Activated naive CD4-positive, alpha-beta T cell treated with anti-CD3 and anti-CD28 coated beads for 36 hours (primary cell): ENCODE measurements at regions of chr17 and their contacts with region 1.

Region 1: GRCh38 chr17:720706-721538 is 6.3 kb upstream of the VPS53 start:
- DNase-seq: no peak
- H3K4me3 Mint-ChIP-seq: no peak overlapping the region
- H3K27ac Mint-ChIP-seq: no peak overlapping the region
- H3K4me1 Mint-ChIP-seq: peaks cover 2% of the 10 kb centered on the region
- H3K27me3 Mint-ChIP-seq: no peaks in the 10 kb centered on the region

Region 2: GRCh38 chr17:740240-741017 is 19.5 kb after region 1 on chr17:
- CTCF ChIA-PET with region 1: no interaction called
- intact Hi-C with region 1: loop called (anchors 1 kb)
- DNase-seq: peak; percentile 74
- H3K4me3 Mint-ChIP-seq: no peak overlapping the region
- H3K27ac Mint-ChIP-seq: peak overlapping the region; percentile 67
- H3K4me1 Mint-ChIP-seq: peaks cover 14% of the 10 kb centered on the region
- H3K27me3 Mint-ChIP-seq: no peaks in the 10 kb centered on the region